CD14-positive monocyte (primary cell): ENCODE measurements at regions of chr20 and their contacts with region 1.

Region 1: DNA sequence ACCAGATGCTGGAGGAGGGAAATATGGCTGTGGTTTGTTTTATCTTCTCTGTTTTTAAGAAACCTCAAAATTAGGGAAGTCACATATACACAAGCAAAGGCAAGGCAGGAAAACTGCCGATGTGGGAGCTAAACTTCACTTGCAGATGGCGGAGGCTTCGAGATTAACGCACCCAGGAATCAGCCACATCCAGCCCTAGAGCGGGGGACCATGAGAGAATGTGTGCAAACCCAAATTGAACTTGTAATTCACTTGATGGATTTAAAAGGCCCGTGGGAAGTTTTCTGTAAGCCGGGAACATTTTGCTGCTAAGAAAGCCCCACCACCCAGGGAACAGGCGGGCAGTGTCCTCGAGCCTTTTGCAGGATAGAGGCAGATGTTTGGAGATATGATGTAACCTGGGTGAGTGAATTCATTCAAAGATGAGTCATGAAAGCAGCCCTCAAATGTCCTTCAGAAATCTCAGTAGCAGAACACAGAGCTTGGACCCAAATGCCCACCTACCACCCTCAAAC is 39.9 kb downstream of the PREX1 start:
- DNase-seq: peak; percentile 71 to 90 (median 86)
- H3K4me3 ChIP-seq: peak overlapping the region in 1 of 3 experiments; percentile 64
- H3K4me3 Mint-ChIP-seq: peak overlapping the region; percentile 45 to 81
- H3K27ac ChIP-seq: peak overlapping the region; percentile 78 to 96
- H3K27ac Mint-ChIP-seq: peak overlapping the region; percentile 95 to 99 (median 98)
- H3K4me1 ChIP-seq: peaks cover 83 to 91% of the 10 kb centered on the region in 2 donors
- H3K4me1 Mint-ChIP-seq: peaks cover 83% of the 10 kb centered on the region
- H3K27me3 ChIP-seq: no peaks in the 10 kb centered on the region
- H3K27me3 Mint-ChIP-seq: peaks cover 0 to 5% (median 2%) of the 10 kb centered on the region in 3 donors
- CTCF ChIP-seq: no peak

Region 2: GRCh38 chr20:48750947-48751635 is 36.8 kb before region 1 on chr20:
- intact Hi-C with region 1: loop called in 1 of 2 experiments (anchors 5 kb)
- DNase-seq: peak; percentile 75 to 92 (median 82)
- H3K4me3 ChIP-seq: peak overlapping the region in 1 of 3 experiments; percentile 36
- H3K4me3 Mint-ChIP-seq: peak overlapping the region; percentile 19 to 39
- H3K27ac ChIP-seq: peak overlapping the region; percentile 88 to 89
- H3K27ac Mint-ChIP-seq: peak overlapping the region; percentile 87 to 97 (median 96)
- H3K4me1 ChIP-seq: peaks cover 64 to 76% of the 10 kb centered on the region in 2 donors
- H3K4me1 Mint-ChIP-seq: peaks cover 81% of the 10 kb centered on the region
- H3K27me3 ChIP-seq: no peaks in the 10 kb centered on the region
- H3K27me3 Mint-ChIP-seq: peaks cover 0 to 2% (median 1%) of the 10 kb centered on the region in 3 donors
- CTCF ChIP-seq: no peak

Region 3: DNA sequence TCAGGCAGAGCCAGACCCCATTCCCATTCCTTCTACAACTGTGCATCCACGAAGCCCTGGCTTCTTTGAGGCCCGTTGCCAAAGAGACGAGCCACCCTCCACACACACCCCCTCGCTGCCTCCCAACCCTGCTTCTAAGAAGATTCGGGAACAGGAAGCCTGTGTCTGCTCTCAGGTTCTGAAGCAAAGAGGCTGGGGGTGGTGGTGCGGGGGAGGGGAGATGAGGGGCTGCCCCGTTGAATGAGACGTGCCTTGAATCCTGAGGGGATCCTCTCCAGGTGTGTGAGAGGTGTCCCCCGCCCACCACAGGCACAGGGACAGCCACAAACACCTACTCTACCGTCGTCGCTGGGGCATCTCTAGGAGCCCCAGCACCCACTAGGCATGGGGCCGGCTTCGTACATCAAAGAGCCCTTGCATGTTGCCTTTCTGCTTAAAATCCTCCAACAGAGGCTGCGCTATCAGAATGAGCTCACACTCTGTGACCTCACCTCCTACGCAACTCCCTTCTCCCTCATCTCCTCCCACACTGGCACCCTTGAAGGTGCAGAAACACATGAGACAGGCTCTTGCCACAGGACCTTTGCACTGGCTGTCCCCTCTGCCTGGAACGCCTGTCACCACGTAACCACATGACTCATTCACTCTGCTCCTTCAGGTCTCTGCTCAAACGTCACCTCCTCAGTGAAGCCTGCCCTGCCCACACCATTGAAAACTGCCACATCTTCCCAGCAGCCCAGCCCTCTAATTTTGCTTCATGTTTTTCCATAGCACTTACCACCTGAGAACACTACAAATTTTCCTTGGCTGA is 18.6 kb before region 1 on chr20:
- intact Hi-C with region 1: loop called in 1 of 2 experiments (anchors 2 kb)
- DNase-seq: peak; percentile 88 to 95 (median 92)
- H3K4me3 ChIP-seq: no peak overlapping the region
- H3K4me3 Mint-ChIP-seq: peak overlapping the region in 1 of 2 donors; percentile 47
- H3K27ac ChIP-seq: peak overlapping the region; percentile 37 to 94
- H3K27ac Mint-ChIP-seq: peak overlapping the region; percentile 71 to 99 (median 85)
- H3K4me1 ChIP-seq: peaks cover 93 to 99% of the 10 kb centered on the region in 2 donors
- H3K4me1 Mint-ChIP-seq: peaks cover 99% of the 10 kb centered on the region
- H3K27me3 ChIP-seq: no peaks in the 10 kb centered on the region
- H3K27me3 Mint-ChIP-seq: no peaks in the 10 kb centered on the region
- CTCF ChIP-seq: no peak

Region 4: DNA sequence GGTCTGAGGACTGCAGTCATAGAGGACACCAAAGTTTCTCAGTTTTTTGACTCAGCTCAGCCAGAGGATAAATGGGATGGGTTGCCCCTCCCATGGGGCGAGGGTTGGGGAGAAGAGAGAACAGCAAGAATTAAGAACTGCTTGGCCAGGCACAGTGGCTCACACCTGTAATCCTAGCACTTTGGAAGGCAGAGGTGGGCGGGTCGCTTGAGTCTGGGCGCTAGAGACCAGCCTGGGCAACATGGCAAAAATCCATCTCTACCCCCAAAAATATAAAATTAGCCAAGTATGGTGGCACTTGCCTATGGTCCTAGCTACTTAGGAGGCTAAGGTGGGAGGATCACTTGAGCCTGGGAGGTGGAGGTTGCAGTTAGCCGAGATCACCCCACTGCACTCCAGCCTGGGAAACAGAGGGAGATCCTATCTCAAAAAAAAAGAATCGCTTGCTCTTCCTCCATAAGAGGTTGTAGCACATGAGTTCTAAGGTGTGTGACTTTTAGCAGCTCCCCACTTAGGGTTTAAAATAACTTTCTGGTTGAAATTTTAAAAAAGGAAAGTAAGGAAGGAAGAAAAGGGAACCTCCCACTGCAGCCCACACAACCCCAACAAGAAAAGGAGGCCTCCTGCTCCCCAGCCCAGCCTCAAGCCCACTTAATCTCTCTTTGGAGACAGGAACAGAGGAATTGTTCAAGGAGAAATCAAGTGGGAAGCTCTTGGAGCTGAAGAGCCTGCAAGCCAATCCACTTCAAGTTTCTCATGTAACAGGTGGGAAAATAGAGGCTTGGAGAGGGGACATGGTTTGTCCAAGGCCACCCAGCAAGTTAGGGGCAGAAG is 78.8 kb after region 1 on chr20:
- intact Hi-C with region 1: no loop called
- DNase-seq: no peak
- H3K4me3 ChIP-seq: peak overlapping the region in 1 of 3 experiments; percentile 15
- H3K4me3 Mint-ChIP-seq: peak overlapping the region in 1 of 2 donors; percentile 51
- H3K27ac ChIP-seq: peak overlapping the region in 1 of 2 donors; percentile 0
- H3K27ac Mint-ChIP-seq: peak overlapping the region in 6 of 7 donors; percentile 4 to 65 (median 60)
- H3K4me1 ChIP-seq: peaks cover 31 to 37% of the 10 kb centered on the region in 2 donors
- H3K4me1 Mint-ChIP-seq: peaks cover 52% of the 10 kb centered on the region
- H3K27me3 ChIP-seq: no peaks in the 10 kb centered on the region
- H3K27me3 Mint-ChIP-seq: peaks cover 0 to 2% (median 0%) of the 10 kb centered on the region in 3 donors
- CTCF ChIP-seq: no peak